ENCODE measurements at regions of chr11 and their contacts with region 1.

Region 1: GRCh38 chr11:83071567-83072349 is at the start of gene RAB30:
- DNase-seq: peak; percentile 95
- ATAC-seq: peak; percentile 98
- H3K4me3 Mint-ChIP-seq: no peak within 1 kb of the TSS
- H3K27ac Mint-ChIP-seq: no peak within 1 kb of the TSS
- H3K4me1 Mint-ChIP-seq: peaks cover 33% of the 10 kb centered on the region
- H3K27me3 Mint-ChIP-seq: no peaks in the 10 kb centered on the region
- total RNA-seq, gene RAB30: 11.4 to 13.2 TPM

Region 2: DNA sequence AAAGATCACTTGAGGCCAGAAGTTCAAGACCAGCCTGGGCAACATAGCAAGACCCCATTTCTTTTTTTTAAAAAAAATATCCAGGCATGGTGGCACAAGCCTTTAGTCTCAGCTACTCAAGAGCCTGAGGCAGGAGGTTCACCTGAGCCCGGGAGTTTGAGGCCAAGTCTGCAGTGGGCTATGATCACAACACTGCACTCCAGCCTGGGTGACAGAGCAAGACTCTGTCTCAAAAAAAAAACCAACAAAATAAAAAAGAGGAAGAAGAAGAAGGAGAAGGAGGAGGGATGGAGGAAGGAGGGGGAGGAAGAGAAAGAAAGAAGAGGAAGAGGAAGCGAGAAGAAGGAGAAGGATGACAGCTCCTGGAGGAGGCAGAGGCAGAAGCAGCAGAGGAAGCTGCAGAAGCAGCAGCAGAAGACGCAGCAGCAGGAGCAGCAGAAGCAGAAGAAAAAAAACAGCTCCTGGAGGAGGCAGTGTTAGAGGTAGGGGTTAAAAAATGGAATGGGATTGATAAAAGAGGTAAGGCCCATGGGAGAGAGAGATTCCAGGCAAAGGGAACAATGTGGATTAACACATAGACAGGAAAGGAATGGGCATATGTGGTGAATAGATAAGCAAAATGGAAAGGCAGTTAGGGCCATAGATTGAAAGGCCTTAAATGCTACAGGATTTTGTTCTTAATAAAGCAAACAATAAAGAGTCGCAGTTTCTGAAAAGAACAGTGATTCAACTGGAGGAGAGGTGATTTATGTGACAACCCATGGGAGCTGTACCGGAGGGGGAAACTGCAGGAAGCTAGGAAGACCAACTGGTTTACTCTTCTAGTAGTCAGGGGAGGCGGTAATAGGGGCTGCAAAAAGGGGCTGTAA is 182.4 kb before region 1 on chr11:
- CTCF ChIA-PET with region 1: no interaction called
- POLR2A ChIA-PET with region 1: no interaction called
- intact Hi-C with region 1: no loop called
- DNase-seq: no peak
- ATAC-seq: no peak
- H3K4me3 Mint-ChIP-seq: no peak overlapping the region
- H3K27ac Mint-ChIP-seq: no peak overlapping the region
- H3K4me1 Mint-ChIP-seq: no peaks in the 10 kb centered on the region
- H3K27me3 Mint-ChIP-seq: no peaks in the 10 kb centered on the region

Region 3: DNA sequence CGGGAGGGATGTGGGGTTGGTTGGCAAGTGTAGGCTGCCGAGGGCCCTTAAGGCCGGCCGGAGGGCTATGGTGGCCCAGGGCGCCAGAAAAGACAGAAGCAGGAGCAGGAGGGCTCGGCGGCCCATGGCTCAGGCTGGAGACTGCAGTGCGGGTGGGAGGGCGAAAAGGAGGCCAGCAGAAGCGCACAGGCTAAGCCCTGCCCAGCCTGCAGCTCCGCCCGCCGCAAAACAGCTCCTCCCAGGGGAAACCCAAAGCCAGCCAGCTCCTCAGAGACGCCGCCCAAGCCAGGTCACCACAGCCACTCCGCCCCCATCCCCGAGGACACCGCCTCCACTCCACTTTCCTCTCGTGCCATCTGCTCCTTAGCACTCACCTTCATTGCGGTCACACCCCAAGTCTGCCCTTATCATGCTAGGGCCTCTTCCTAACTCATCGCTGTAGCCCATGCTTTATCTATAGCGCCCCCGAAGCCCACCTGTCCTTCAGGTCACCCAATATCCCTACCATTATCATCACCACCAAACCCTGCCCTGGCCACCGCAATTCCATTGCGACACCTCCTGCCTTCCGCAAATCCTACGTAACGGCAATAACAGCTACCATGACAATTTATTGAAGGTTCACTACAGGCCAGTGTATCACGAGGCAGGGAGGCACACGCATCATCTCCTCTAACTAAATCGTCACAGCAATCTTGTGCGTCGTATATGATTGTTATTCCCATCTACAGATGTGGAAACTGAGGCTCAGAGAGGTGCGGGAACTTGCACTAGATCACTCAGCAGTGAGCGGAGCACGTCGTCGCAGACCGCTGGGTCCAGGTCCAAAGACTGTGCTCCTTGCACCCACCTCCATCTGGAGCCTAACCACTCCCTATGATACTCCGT is 171.2 kb before region 1 on chr11 and contains the start of gene PRCP:
- CTCF ChIA-PET with region 1: interaction called, 7 read pairs
- POLR2A ChIA-PET with region 1: interaction called, 7 read pairs
- intact Hi-C with region 1: loop called (anchors 1 kb)
- DNase-seq: peak; percentile 97
- ATAC-seq: peak; percentile 85
- H3K4me3 Mint-ChIP-seq: peak within 1 kb of the TSS; percentile 91
- H3K27ac Mint-ChIP-seq: peak within 1 kb of the TSS; percentile 100
- H3K4me1 Mint-ChIP-seq: peaks cover 44% of the 10 kb centered on the region
- H3K27me3 Mint-ChIP-seq: no peaks in the 10 kb centered on the region
- total RNA-seq, gene PRCP: 18.2 to 23.4 TPM

Region 4: DNA sequence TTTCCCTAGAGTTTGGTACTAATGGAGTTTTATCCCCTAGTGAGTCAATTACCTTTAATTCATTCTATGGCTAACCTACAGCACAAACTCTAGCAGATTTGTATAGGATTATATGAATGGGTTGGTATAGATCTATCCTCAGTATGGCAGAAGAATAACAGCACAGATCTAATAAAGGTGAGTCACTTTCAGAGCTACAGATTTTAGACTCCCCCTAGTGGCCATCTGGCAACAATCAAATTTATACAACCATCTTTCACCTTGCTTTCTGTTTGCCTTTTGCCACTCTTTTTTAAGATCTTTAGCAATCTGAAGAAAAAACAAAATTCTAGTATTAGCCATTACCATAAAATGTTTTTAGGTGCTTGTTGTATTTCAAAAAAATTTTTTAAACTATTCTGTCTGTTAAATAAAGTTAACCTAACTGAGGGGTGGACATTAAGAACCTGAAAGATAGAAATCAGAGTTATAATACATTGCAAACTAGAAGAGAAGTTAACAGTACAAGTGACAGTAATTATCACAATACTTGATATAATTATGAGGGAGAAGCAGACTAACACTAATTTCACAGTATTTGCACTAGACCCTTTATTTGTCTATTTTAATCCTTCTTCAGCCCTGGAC is 144.4 kb before region 1 on chr11:
- CTCF ChIA-PET with region 1: interaction called, 5 read pairs
- POLR2A ChIA-PET with region 1: interaction called, 3 read pairs
- intact Hi-C with region 1: loop called in 1 of 2 experiments (anchors 2 kb)
- DNase-seq: peak; percentile 22
- ATAC-seq: peak; percentile 81
- H3K4me3 Mint-ChIP-seq: no peak overlapping the region
- H3K27ac Mint-ChIP-seq: no peak overlapping the region
- H3K4me1 Mint-ChIP-seq: peaks cover 21% of the 10 kb centered on the region
- H3K27me3 Mint-ChIP-seq: no peaks in the 10 kb centered on the region

Region 5: GRCh38 chr11:82996966-82997606 is 74.7 kb before region 1 on chr11:
- CTCF ChIA-PET with region 1: no interaction called
- POLR2A ChIA-PET with region 1: no interaction called
- intact Hi-C with region 1: loop called (anchors 1 to 2 kb)
- DNase-seq: peak; percentile 59
- ATAC-seq: peak; percentile 51
- H3K4me3 Mint-ChIP-seq: no peak overlapping the region
- H3K27ac Mint-ChIP-seq: no peak overlapping the region
- H3K4me1 Mint-ChIP-seq: peaks cover 65% of the 10 kb centered on the region
- H3K27me3 Mint-ChIP-seq: no peaks in the 10 kb centered on the region

Region 6: DNA sequence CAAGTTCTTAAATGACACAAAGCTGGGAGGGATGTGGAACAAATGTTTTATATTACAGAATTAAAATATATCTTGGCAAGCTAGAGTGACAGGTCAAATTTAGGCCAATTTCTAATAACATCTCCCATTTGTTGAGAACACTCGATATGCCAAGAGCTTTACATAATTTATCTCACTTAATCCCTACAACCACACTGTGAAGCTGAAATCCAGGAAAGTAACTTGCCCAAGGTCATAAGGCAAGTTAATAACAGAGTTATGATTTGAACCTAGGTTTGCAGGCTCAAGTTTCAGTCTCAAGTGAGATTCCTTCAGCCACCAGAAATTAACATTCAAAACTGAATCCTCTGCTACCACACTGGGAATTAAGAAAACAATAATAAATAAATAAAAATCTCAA is 38.4 kb before region 1 on chr11:
- CTCF ChIA-PET with region 1: no interaction called
- POLR2A ChIA-PET with region 1: no interaction called
- intact Hi-C with region 1: no loop called
- DNase-seq: no peak
- ATAC-seq: no peak
- H3K4me3 Mint-ChIP-seq: no peak overlapping the region
- H3K27ac Mint-ChIP-seq: no peak overlapping the region
- H3K4me1 Mint-ChIP-seq: peaks cover 32% of the 10 kb centered on the region
- H3K27me3 Mint-ChIP-seq: no peaks in the 10 kb centered on the region

Region 7: DNA sequence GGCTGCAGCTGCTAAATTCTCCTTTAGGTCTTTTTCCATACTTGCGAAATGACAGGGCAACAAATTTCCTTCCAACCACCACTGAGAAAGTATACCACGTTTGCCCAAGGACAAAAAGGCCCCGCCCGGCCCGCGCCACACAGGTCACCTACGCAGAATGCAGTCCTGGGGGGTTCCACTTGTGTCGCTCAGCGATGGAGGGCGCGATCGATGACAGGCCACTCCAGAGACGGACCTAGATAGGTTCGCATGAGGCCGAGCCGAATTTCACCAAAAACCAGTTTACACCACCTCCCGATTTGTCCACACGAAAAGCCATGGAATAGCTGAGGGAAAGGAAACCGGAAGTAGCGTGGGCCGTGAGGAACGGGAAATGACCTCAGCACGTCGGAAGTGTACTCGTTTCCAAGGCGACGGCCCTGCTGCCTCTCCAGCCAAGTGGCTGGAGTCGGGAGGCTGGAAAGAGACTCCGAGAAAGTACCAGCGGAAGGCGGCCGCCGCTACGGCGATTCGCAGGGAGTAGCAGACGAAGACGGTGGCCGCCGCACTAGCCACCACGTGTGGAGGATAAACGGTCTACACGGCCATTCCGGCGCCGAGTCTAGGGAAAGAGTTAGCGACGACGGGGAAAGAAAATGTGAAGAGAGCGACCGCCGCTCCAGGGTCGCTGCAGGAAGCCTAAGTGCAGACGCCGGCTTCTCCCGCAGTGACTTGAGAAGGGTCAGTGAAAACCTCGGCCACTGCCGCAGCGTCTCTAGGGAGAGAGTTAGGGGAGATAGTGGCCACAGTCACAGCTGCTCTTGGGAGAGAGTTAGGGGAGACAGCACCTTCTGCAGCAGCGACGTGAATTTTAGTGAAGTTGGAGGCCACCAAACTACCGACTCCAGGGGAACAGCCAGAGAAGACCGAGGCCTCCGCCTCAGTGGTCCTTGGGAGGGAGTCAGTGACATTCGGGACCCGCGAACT is 121.8 kb after region 1 on chr11 and contains the start of gene ANKRD42:
- CTCF ChIA-PET with region 1: interaction called, 4 read pairs
- POLR2A ChIA-PET with region 1: no interaction called
- intact Hi-C with region 1: loop called (anchors 1 kb)
- DNase-seq: peak; percentile 92
- ATAC-seq: peak; percentile 75
- H3K4me3 Mint-ChIP-seq: peak within 1 kb of the TSS; percentile 95
- H3K27ac Mint-ChIP-seq: peak within 1 kb of the TSS; percentile 98
- H3K4me1 Mint-ChIP-seq: peaks cover 40% of the 10 kb centered on the region
- H3K27me3 Mint-ChIP-seq: no peaks in the 10 kb centered on the region
- total RNA-seq, gene ANKRD42: 3.1 to 4.9 TPM

Region 8: DNA sequence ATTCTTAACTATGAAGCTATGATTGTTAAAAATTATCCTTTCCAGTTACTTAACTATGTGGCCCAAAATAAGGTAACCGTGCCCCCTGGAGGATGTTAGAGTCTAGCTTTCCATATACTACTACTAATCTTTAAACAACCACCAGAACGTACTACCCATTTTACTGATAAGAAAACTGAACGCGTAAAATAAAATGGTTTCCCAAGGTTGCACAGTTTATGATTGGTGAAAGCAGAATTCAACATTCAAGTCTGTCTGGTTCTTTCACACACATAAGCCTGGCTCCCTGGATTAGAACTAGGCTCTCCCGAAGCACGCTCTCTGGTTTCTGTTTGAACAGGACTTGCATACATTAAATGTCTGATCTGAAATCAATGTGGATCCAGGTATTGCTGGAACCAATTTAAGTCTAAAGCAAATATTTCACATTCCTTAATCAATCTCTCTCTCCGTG is 652.3 kb after region 1 on chr11:
- CTCF ChIA-PET with region 1: no interaction called
- POLR2A ChIA-PET with region 1: no interaction called
- intact Hi-C with region 1: no loop called
- DNase-seq: peak; percentile 33
- ATAC-seq: peak; percentile 60
- H3K4me3 Mint-ChIP-seq: no peak overlapping the region
- H3K27ac Mint-ChIP-seq: no peak overlapping the region
- H3K4me1 Mint-ChIP-seq: peaks cover 4% of the 10 kb centered on the region
- H3K27me3 Mint-ChIP-seq: peaks cover 12% of the 10 kb centered on the region